ENCODE measurements at regions of chr16 and their contacts with region 1.

Region 1: DNA sequence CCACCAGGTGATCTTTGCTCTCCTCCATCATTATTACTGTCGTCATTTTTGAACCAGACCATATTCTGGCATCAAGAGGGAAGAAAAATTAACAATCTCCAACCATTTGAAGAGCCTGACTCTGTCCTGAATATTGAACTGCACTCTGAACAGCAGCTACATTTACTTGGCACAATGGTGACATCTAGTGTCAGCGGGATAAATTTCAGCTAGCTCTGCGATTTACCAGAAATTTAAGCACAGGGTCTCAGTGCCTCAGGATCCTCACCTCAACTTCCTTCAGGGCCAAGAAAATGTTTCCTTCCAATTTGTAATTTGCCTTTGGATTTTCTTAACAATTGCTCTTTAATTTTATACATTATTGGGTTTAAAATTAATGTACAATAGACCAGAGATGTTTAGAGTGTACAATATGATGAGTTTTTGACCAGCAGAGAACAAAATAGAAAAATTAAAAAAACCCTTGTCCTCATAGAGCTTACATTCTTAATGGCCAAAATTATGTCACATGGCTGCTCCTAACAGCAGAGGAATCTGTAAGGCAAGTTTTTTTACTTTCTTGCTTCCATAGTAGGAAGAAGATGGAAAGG is 10.7 kb upstream of the ZNF19 start:
- DNase-seq: peak; percentile 80
- ATAC-seq: peak; percentile 69
- H3K4me3 ChIP-seq: no peak overlapping the region
- H3K4me3 Mint-ChIP-seq: no peak overlapping the region
- H3K27ac ChIP-seq: no peak overlapping the region
- H3K27ac Mint-ChIP-seq: no peak overlapping the region
- H3K4me1 ChIP-seq: no peaks in the 10 kb centered on the region
- H3K4me1 Mint-ChIP-seq: no peaks in the 10 kb centered on the region
- H3K27me3 ChIP-seq: peaks cover 0 to 5% (median 1%) of the 10 kb centered on the region in 4 experiments
- H3K27me3 Mint-ChIP-seq: peaks cover 16% of the 10 kb centered on the region
- CTCF ChIP-seq: peak; percentile 91

Region 2: GRCh38 chr16:70746708-70747424 is 753.0 kb before region 1 on chr16:
- CTCF ChIA-PET with region 1: no interaction called
- POLR2A ChIA-PET with region 1: no interaction called
- intact Hi-C with region 1: no loop called
- DNase-seq: no peak
- ATAC-seq: peak; percentile 57
- H3K4me3 ChIP-seq: no peak overlapping the region
- H3K4me3 Mint-ChIP-seq: no peak overlapping the region
- H3K27ac ChIP-seq: no peak overlapping the region
- H3K27ac Mint-ChIP-seq: peak overlapping the region; percentile 50
- H3K4me1 ChIP-seq: no peaks in the 10 kb centered on the region
- H3K4me1 Mint-ChIP-seq: peaks cover 10% of the 10 kb centered on the region
- H3K27me3 ChIP-seq: no peaks in the 10 kb centered on the region
- H3K27me3 Mint-ChIP-seq: no peaks in the 10 kb centered on the region
- CTCF ChIP-seq: no peak

Region 3: DNA sequence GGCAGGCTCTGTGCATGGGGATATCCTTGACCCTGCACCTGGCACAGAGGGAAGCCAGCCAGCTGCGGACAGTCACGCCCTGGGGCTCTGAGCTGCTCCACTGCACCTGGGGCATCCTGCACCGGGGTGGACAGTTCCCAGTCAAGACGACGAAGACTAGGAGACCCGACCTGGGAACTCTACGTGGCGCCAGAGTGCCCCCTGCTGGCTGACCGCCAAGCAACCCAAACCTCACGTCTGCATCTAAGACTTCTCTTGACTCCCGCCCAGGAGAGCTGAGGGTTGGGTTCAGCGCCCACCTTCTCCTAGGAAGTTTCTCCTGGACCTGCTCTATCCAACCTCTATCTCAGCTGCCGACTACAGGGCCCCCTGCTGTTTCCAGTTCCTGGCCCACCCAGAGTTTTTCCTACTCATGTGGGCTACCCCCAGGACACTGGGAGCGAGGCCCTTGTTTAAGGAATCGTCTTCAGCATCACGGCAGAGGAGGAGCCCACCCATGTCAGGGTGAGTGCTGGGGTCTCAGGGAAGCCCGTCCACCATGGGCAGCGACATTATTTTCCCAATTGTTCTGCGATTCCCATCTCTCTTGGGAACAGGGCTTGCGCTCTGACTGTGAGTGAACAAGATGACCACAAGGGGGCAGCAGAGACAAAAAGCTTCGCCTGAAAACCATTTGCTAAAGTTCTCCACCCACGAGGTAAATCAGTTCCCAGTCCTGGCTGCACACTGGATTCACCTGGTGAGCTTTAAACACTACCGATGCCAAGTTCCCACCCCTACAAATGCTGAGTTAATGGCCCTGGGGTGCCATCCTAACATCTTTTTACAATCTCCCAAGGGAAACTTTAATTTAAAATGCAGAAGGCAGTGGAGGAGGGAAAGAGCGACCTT is 87.4 kb before region 1 on chr16:
- CTCF ChIA-PET with region 1: interaction called, 258 read pairs
- POLR2A ChIA-PET with region 1: no interaction called
- intact Hi-C with region 1: loop called (anchors 1 kb)
- DNase-seq: peak; percentile 80
- ATAC-seq: peak; percentile 73
- H3K4me3 ChIP-seq: no peak overlapping the region
- H3K4me3 Mint-ChIP-seq: no peak overlapping the region
- H3K27ac ChIP-seq: no peak overlapping the region
- H3K27ac Mint-ChIP-seq: no peak overlapping the region
- H3K4me1 ChIP-seq: peaks cover 6 to 12% of the 10 kb centered on the region in 2 donors
- H3K4me1 Mint-ChIP-seq: peaks cover 7% of the 10 kb centered on the region
- H3K27me3 ChIP-seq: peaks cover 0 to 12% (median 2%) of the 10 kb centered on the region in 4 experiments
- H3K27me3 Mint-ChIP-seq: peaks cover 45% of the 10 kb centered on the region
- CTCF ChIP-seq: peak; percentile 89

Region 4: GRCh38 chr16:71440669-71441347 is 59.1 kb before region 1 on chr16:
- CTCF ChIA-PET with region 1: interaction called, 11 read pairs
- POLR2A ChIA-PET with region 1: no interaction called
- intact Hi-C with region 1: no loop called
- DNase-seq: no peak
- ATAC-seq: no peak
- H3K4me3 ChIP-seq: no peak overlapping the region
- H3K4me3 Mint-ChIP-seq: no peak overlapping the region
- H3K27ac ChIP-seq: no peak overlapping the region
- H3K27ac Mint-ChIP-seq: no peak overlapping the region
- H3K4me1 ChIP-seq: no peaks in the 10 kb centered on the region
- H3K4me1 Mint-ChIP-seq: no peaks in the 10 kb centered on the region
- H3K27me3 ChIP-seq: peaks cover 0 to 12% (median 2%) of the 10 kb centered on the region in 4 experiments
- H3K27me3 Mint-ChIP-seq: peaks cover 18% of the 10 kb centered on the region
- CTCF ChIP-seq: no peak

Region 5: DNA sequence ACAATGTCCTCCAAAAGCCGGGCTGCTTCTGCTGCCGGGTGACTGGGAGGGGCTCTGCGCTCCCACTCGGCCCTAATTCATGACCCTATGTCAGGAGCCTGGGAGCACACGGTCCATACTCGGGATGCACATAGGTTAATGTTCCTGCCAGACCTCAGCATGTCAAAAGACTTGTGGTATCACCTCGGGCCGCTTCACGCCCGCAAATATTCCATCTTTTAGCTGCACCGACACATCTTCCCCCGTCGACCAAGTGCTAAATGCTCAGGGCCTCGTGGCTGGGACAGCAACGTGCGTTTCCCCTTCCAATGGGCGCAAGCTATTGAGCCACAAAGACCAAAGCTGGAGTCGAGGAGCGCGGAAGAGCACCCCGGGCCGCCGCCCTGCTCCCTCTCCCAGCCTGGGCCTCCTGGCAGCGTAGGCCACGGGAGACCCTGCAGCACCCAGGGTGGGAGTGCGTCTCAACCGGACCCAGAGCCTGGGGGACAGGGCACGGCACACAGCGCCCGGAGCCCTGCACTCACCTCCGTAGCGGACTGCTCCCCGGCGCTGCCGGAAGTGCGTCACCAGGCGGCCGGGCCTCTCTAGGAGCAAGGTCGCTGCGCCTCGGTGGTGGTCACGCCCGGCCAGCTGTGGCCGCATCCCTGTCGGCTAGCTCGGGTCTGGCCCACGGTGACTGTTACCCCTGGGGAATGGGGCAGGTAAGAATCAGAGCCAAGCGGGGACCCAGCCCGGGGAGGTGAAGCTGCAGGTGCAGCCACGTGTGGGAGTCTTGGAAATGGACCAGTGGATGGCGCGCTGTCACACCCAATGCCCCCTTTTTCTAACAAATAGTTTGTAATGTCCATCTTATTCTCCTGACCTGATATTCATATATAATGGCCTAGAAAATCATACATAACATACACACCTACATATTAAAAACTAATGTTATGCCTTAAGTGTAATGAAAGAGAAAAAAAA is 37.9 kb before region 1 on chr16 and contains the start of gene ZNF23:
- CTCF ChIA-PET with region 1: interaction called, 24 read pairs
- POLR2A ChIA-PET with region 1: no interaction called
- intact Hi-C with region 1: loop called (anchors 1 kb)
- DNase-seq: peak; percentile 91
- ATAC-seq: peak; percentile 97
- H3K4me3 ChIP-seq: peak within 1 kb of the TSS; percentile 62 to 99 (median 96)
- H3K4me3 Mint-ChIP-seq: peak within 1 kb of the TSS; percentile 96
- H3K27ac ChIP-seq: peak within 1 kb of the TSS; percentile 91 to 95
- H3K27ac Mint-ChIP-seq: peak within 1 kb of the TSS; percentile 95
- H3K4me1 ChIP-seq: peaks cover 14 to 16% of the 10 kb centered on the region in 2 donors
- H3K4me1 Mint-ChIP-seq: peaks cover 32% of the 10 kb centered on the region
- H3K27me3 ChIP-seq: no peaks in the 10 kb centered on the region
- H3K27me3 Mint-ChIP-seq: no peaks in the 10 kb centered on the region
- CTCF ChIP-seq: peak; percentile 36
- total RNA-seq, gene ZNF23: 15.0 and 18.3 TPM in 2 replicates

Region 6: DNA sequence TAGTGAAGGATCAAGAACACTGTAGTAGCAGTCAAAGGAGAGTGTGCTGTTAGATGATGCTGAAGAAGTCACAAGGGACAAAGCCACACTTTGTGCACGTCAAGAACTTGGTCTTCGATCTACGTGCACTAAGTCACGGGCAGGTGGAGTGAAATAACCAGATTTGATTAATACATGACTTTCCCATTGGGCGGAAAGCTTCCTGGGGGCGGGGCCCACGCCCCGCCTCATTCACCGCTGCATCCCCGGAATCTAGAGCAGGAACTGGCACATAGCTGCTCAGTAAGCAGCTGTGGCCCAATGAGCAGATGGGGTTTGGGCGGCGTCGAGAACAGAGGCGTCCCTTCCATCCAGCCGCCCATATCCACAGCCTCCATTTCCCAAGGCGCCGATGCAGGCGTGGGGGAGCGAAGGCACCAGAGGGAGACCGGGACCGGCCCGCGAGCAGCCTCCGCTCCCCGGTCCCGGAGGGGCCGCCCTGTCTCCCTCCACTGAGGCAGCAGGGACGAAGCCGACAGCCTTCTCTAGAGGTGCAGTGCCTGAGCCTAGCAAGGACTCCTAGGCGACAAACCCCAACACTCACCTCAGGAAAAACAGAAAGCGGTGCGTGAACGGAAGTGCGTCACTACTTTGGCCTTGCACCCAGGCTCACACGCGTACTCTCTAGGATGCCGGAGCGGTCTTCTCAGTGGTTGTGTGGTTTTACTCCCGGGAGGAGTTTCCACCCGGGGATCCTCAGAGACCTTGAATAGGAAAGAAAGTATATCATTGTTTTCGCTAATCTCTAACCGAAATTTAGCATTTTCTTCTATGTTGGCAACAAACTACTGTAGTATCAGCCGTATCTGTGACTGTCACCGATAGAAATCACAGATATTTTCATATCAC is 15.6 kb before region 1 on chr16:
- CTCF ChIA-PET with region 1: interaction called, 27 read pairs
- POLR2A ChIA-PET with region 1: interaction called, 3 read pairs
- intact Hi-C with region 1: no loop called
- DNase-seq: peak; percentile 95
- ATAC-seq: peak; percentile 85
- H3K4me3 ChIP-seq: peak overlapping the region; percentile 57 to 96 (median 89)
- H3K4me3 Mint-ChIP-seq: peak overlapping the region; percentile 89
- H3K27ac ChIP-seq: peak overlapping the region; percentile 99 to 100
- H3K27ac Mint-ChIP-seq: peak overlapping the region; percentile 93
- H3K4me1 ChIP-seq: peaks cover 9 to 12% of the 10 kb centered on the region in 2 donors
- H3K4me1 Mint-ChIP-seq: peaks cover 15% of the 10 kb centered on the region
- H3K27me3 ChIP-seq: no peaks in the 10 kb centered on the region
- H3K27me3 Mint-ChIP-seq: peaks cover 7% of the 10 kb centered on the region
- CTCF ChIP-seq: no peak

Region 7: DNA sequence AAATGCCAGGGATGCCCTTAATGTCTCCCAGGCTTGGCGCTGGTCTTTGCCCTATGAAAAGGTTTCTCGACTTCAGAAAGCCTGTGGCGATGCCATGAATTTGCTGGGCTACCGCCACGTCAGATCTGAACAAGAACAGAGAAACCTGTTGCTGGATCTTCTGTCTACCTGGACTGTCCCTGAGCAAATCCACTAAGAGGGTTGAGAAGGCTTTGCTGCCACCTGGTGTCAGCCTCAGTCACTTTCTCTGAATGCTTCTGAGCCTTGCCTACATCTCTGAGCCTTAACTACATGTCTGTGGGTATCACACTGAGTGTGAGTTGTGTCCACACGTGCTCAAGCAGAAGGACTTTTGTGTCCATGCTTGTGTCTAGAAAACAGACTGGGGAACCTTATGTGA is 37.8 kb after region 1 on chr16:
- CTCF ChIA-PET with region 1: interaction called, 12 read pairs
- POLR2A ChIA-PET with region 1: no interaction called
- intact Hi-C with region 1: no loop called
- DNase-seq: peak; percentile 64
- ATAC-seq: peak; percentile 73
- H3K4me3 ChIP-seq: no peak overlapping the region
- H3K4me3 Mint-ChIP-seq: no peak overlapping the region
- H3K27ac ChIP-seq: no peak overlapping the region
- H3K27ac Mint-ChIP-seq: no peak overlapping the region
- H3K4me1 ChIP-seq: peaks cover 13 to 15% of the 10 kb centered on the region in 2 donors
- H3K4me1 Mint-ChIP-seq: peaks cover 15% of the 10 kb centered on the region
- H3K27me3 ChIP-seq: peaks cover 0 to 7% (median 2%) of the 10 kb centered on the region in 4 experiments
- H3K27me3 Mint-ChIP-seq: peaks cover 13% of the 10 kb centered on the region
- CTCF ChIP-seq: peak; percentile 80

Region 8: GRCh38 chr16:71746442-71747046 is 246.7 kb after region 1 on chr16:
- CTCF ChIA-PET with region 1: no interaction called
- POLR2A ChIA-PET with region 1: no interaction called
- intact Hi-C with region 1: loop called (anchors 5 kb)
- DNase-seq: peak; percentile 75
- ATAC-seq: peak; percentile 58
- H3K4me3 ChIP-seq: no peak overlapping the region
- H3K4me3 Mint-ChIP-seq: no peak overlapping the region
- H3K27ac ChIP-seq: no peak overlapping the region
- H3K27ac Mint-ChIP-seq: peak overlapping the region; percentile 50
- H3K4me1 ChIP-seq: no peaks in the 10 kb centered on the region
- H3K4me1 Mint-ChIP-seq: peaks cover 4% of the 10 kb centered on the region
- H3K27me3 ChIP-seq: no peaks in the 10 kb centered on the region
- H3K27me3 Mint-ChIP-seq: no peaks in the 10 kb centered on the region
- CTCF ChIP-seq: peak; percentile 85